Caki2 (cell line): ENCODE measurements at regions of chr18 and their contacts with region 1.

Region 1: GRCh38 chr18:31241900-31242409 is 76.0 kb upstream of the DSG1 start:
- DNase-seq: peak; percentile 78

Region 2: GRCh38 chr18:31506024-31506742 is 264.2 kb after region 1 on chr18:
- in situ Hi-C with region 1: loop called (anchors 25 kb)
- DNase-seq: no peak